Astrocyte of the cerebellum (primary cell): ENCODE measurements at regions of chr12 and their contacts with region 1.

Region 1: DNA sequence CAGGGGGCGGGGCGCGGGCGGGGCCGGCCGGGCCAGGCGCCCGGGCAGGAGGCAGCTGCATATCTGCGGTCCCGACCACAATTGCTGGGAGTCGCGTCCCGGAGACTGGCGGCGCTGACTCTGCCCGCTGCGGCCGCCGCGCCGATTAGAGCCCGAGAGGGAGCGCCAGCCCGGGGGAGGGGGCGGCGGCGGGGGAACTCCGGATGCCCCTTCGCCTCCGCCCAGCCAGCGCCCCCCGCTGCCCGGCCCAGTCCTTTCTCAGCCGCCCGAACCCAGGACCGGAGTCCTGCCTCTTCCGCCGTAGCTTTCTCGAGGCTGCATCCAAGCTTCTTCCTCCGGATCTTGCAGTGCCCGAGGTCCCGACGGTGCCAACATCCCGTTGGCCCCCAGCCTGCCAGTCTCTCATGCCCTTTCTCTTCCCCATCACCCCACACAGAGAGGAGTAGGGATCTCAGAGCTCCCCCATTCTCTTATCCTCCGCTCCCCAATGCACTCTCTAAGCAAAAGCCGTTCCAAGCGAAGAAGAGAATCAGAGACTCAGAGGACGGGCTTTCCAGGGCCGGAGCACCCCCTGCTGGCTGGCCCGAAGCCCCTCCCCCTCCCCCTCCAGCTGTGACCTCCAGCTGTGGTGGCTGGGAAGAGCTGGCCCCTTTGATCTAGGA is 8.8 kb upstream of the SP7 start:
- DNase-seq: peak; percentile 44
- H3K4me3 ChIP-seq: peak overlapping the region; percentile 38
- CTCF ChIP-seq: peak; percentile 28

Region 2: GRCh38 chr12:53424626-53425514 is 79.9 kb after region 1 on chr12:
- in situ Hi-C with region 1: loop called (anchors 5 kb)
- DNase-seq: no peak
- H3K4me3 ChIP-seq: no peak overlapping the region
- CTCF ChIP-seq: no peak

Region 3: GRCh38 chr12:53887006-53887405 is 542.1 kb after region 1 on chr12:
- in situ Hi-C with region 1: no loop called
- DNase-seq: no peak
- H3K4me3 ChIP-seq: no peak overlapping the region
- CTCF ChIP-seq: no peak